Right lobe of liver (tissue), 6 donors: ENCODE measurements at regions of chr4 and their contacts with region 1.

Region 1: GRCh38 chr4:140861359-140862176 is 105.4 kb upstream of the TBC1D9 start:
- DNase-seq: peak in 1 of 3 donors; percentile 68
- ATAC-seq: peak; percentile 87 to 92 (median 88)
- H3K4me3 ChIP-seq: no peak overlapping the region
- H3K27ac ChIP-seq: no peak overlapping the region
- H3K4me1 ChIP-seq: no peaks in the 10 kb centered on the region
- H3K27me3 ChIP-seq: no peaks in the 10 kb centered on the region
- CTCF ChIP-seq: peak; percentile 73 to 93 (median 77)
- POLR2A ChIP-seq: no peak

Region 2: GRCh38 chr4:141028024-141028529 is 166.5 kb after region 1 on chr4:
- intact Hi-C with region 1: no loop called
- DNase-seq: no peak
- ATAC-seq: no peak
- H3K4me3 ChIP-seq: no peak overlapping the region
- H3K27ac ChIP-seq: no peak overlapping the region
- H3K4me1 ChIP-seq: no peaks in the 10 kb centered on the region
- H3K27me3 ChIP-seq: no peaks in the 10 kb centered on the region
- CTCF ChIP-seq: no peak
- POLR2A ChIP-seq: no peak

Region 3: GRCh38 chr4:141133146-141133998 is 271.8 kb after region 1 on chr4 and contains the start of gene RNF150:
- intact Hi-C with region 1: loop called (anchors 5 to 10 kb)
- DNase-seq: peak; percentile 61 to 74 (median 66)
- ATAC-seq: peak; percentile 90 to 92 (median 92)
- H3K4me3 ChIP-seq: peak within 1 kb of the TSS; percentile 55 to 72 (median 69)
- H3K27ac ChIP-seq: peak within 1 kb of the TSS in 2 of 3 donors; percentile 23 to 43
- H3K4me1 ChIP-seq: peaks cover 0 to 4% (median 0%) of the 10 kb centered on the region in 4 donors
- H3K27me3 ChIP-seq: peaks cover 0 to 9% of the 10 kb centered on the region in 2 donors
- CTCF ChIP-seq: peak; percentile 55 to 70 (median 62)
- POLR2A ChIP-seq: no peak
- total RNA-seq, gene RNF150: 1.2 to 1.8 (median 1.5) TPM